Activated naive CD4-positive, alpha-beta T cell treated with anti-CD3 and anti-CD28 coated beads for 36 hours (primary cell): ENCODE measurements at regions of chr12 and their contacts with region 1.

Region 1: DNA sequence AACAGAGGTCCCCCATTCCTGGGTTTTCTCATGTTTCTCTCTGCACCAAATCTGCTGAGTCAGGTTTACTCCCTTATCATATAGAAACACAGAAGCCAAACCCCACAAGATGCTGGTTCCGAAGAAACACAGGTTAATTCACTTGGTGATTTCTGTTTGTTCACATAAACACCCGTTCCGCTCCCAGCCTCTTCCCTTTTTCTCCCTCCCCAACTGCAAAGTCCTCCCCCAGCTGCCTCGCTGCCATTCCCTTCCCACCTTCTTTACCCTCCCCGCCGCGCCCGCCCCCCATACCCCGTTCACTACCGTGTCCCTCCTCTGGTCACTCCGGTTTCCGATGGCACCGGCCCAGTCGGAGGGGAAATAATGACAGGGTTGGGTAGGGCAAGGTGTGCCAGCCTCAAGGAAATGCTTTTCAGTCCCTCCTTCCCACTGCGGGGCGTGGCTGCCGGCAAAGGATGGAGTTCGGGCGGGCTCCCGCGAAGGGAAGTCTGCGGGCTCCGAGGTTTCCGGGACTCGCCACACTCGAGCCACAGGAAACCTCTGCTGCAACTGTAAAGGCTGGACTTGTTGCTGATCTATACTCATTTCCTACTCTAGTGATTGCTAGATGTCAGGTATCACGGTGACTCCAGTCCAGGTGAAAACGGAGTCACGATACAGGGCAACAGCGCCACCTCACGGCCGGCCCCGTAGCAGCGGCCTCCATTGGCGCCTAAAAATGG is at the start of gene STYK1:
- DNase-seq: peak; percentile 86
- H3K4me3 Mint-ChIP-seq: peak within 1 kb of the TSS; percentile 68
- H3K27ac Mint-ChIP-seq: no peak within 1 kb of the TSS
- H3K4me1 Mint-ChIP-seq: peaks cover 20% of the 10 kb centered on the region
- H3K27me3 Mint-ChIP-seq: peaks cover 34% of the 10 kb centered on the region
- total RNA-seq, gene STYK1: not detected

Region 2: GRCh38 chr12:10153271-10154144 is 520.3 kb before region 1 on chr12:
- CTCF ChIA-PET with region 1: interaction called, 3 read pairs
- intact Hi-C with region 1: loop called (anchors 1 kb)
- DNase-seq: peak; percentile 66
- H3K4me3 Mint-ChIP-seq: peak overlapping the region; percentile 76
- H3K27ac Mint-ChIP-seq: peak overlapping the region; percentile 63
- H3K4me1 Mint-ChIP-seq: peaks cover 10% of the 10 kb centered on the region
- H3K27me3 Mint-ChIP-seq: peaks cover 18% of the 10 kb centered on the region

Region 3: DNA sequence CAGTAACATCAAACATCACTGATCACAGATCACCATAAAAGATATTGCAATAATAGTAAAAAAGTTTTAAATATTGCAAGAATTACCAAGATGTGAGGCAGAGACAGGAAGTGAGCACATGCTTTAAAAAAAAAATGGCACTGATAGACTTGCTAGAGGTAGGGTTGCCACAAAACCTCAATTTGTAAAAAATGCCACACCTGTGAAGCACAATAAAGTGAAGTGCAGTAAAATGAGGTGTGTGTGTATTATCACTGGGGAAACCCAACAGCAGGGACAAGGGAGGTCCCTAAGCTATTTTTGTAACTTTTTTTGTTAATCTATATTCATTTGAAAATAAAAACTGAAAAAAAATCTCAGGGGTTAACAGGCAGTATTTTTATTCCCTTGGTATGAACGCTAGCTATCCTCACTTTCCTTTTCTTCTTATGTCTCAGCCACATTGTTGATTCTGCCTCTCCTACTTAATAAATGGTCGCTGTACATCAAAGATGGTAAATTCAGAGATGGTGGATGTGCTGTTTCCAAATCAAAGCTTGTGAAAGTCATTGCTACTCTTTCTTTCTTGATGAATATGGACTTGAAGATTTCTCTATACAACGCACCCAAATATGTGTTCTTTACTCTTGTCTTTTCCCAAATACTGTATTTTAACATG is 380.1 kb before region 1 on chr12:
- CTCF ChIA-PET with region 1: no interaction called
- intact Hi-C with region 1: loop called (anchors 1 kb)
- DNase-seq: no peak
- H3K4me3 Mint-ChIP-seq: no peak overlapping the region
- H3K27ac Mint-ChIP-seq: peak overlapping the region; percentile 7
- H3K4me1 Mint-ChIP-seq: peaks cover 16% of the 10 kb centered on the region
- H3K27me3 Mint-ChIP-seq: peaks cover 5% of the 10 kb centered on the region

Region 4: DNA sequence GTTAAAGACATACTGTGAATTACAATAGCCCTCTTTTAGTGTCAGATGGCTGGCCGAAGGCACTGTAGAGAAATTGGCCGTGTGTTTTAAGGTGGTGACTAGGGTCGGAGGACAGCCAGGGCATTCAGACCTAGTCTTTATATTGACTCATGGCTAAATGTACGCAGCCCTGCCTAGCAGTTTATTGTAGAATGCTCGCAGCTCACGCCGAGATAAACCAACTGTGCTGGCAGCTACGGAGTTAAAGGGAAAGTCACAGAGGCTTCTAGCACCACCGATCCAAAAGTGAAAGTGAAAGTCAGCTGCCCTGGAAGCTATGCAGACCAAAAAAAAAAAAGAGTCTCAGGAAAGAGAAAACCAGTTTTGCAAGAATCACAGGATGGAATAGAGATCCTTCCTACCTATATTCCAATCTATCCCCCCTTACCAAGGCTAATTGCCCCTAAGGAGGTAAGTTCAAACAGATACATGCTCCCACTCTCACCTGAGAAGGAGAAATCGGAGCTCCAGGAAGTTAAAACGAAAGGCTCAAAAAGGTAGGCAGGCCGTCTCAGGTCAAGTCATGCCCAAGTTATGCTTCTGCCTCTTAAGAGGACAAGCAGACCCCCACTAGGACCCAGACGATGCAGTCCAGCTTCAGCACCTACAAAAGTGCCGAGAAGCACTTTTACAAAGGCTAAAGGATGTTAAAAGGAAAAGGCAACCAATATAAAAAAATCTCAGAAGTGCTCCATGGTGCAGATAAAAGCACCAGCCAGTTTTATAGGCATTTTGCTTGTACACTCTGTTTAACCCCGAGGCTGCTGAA is 308.8 kb before region 1 on chr12:
- CTCF ChIA-PET with region 1: no interaction called
- intact Hi-C with region 1: loop called (anchors 10 kb)
- DNase-seq: peak; percentile 72
- H3K4me3 Mint-ChIP-seq: no peak overlapping the region
- H3K27ac Mint-ChIP-seq: no peak overlapping the region
- H3K4me1 Mint-ChIP-seq: peaks cover 15% of the 10 kb centered on the region
- H3K27me3 Mint-ChIP-seq: no peaks in the 10 kb centered on the region

Region 5: GRCh38 chr12:10613349-10614055 is 60.3 kb before region 1 on chr12 and contains the start of gene MAGOHB:
- CTCF ChIA-PET with region 1: interaction called, 3 read pairs
- intact Hi-C with region 1: loop called (anchors 1 kb)
- DNase-seq: peak; percentile 99
- H3K4me3 Mint-ChIP-seq: peak within 1 kb of the TSS; percentile 99
- H3K27ac Mint-ChIP-seq: peak within 1 kb of the TSS; percentile 99
- H3K4me1 Mint-ChIP-seq: peaks cover 30% of the 10 kb centered on the region
- H3K27me3 Mint-ChIP-seq: peaks cover 2% of the 10 kb centered on the region
- total RNA-seq, gene MAGOHB: 58.8 to 61.1 TPM

Region 6: DNA sequence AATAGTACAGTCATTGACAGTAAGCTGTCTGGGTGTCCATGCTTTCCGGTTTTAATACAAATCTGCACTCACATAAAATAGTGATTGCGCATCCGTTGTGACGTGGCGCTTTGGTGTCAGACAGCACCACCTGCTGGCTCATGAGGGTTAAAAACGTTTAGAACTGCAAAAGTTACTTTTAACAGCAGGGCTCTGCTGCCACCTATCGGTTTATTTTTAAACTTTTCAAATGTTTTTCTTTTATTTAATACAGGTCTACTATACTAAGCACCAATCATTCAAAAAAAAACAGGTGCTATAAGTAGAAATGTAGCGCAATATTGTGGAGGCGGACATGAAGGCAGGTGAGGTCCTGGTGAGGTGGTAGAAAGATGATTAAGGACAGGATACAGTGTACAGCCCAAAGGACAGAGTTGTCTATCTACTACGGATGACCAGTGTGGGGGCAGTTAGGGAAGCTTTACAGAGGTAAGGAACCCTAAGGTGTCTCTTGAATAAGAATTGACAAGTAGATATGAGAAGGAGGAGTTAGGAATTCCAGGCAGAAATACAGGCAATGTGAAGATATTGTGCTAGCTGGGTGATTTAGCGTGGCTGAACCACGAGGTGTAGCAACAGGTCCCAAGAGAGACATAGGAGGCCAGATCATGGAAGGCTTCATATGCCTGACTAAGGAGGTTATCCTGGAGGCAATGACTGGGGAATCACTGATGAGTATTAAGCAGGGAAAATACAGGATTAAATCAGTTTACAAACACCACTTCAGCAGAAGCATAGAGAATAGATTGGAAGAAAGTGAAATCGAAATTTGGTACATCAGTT is 813.0 kb after region 1 on chr12:
- CTCF ChIA-PET with region 1: no interaction called
- intact Hi-C with region 1: loop called (anchors 5 kb)
- DNase-seq: peak; percentile 93
- H3K4me3 Mint-ChIP-seq: no peak overlapping the region
- H3K27ac Mint-ChIP-seq: no peak overlapping the region
- H3K4me1 Mint-ChIP-seq: peaks cover 4% of the 10 kb centered on the region
- H3K27me3 Mint-ChIP-seq: peaks cover 3% of the 10 kb centered on the region